ENCODE measurements at regions of chr19 and their contacts with region 1.

Region 1: DNA sequence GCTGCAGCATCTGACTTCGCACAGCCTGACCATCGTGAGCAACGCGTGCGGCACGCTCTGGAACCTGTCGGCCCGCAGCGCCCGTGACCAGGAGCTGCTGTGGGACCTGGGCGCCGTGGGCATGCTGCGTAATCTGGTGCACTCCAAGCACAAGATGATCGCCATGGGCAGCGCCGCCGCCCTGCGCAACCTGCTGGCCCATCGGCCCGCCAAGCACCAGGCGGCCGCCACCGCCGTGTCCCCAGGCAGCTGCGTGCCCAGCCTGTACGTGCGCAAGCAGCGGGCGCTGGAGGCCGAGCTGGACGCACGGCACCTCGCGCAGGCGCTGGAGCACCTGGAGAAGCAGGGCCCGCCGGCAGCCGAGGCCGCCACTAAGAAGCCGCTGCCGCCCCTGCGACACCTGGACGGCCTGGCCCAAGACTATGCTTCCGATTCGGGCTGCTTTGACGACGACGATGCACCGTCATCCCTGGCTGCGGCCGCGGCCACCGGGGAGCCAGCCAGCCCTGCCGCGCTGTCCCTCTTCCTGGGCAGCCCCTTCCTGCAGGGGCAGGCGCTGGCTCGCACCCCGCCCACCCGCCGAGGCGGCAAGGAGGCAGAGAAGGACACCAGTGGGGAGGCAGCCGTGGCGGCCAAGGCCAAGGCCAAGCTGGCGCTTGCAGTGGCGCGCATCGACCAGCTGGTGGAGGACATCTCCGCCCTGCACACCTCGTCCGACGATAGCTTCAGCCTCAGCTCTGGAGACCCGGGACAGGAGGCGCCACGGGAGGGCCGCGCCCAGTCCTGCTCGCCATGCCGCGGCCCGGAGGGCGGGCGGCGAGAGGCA is 13.6 kb downstream of the C19orf25 start:
- DNase-seq: peak; percentile 72
- H3K4me3 Mint-ChIP-seq: no peak overlapping the region
- H3K27ac Mint-ChIP-seq: no peak overlapping the region
- H3K4me1 Mint-ChIP-seq: no peaks in the 10 kb centered on the region
- H3K27me3 Mint-ChIP-seq: peaks cover 1% of the 10 kb centered on the region

Region 2: GRCh38 chr19:1754616-1755466 is 289.4 kb after region 1 on chr19:
- intact Hi-C with region 1: loop called (anchors 5 kb)
- DNase-seq: peak; percentile 71
- H3K4me3 Mint-ChIP-seq: no peak overlapping the region
- H3K27ac Mint-ChIP-seq: peak overlapping the region; percentile 80
- H3K4me1 Mint-ChIP-seq: peaks cover 2% of the 10 kb centered on the region
- H3K27me3 Mint-ChIP-seq: peaks cover 63% of the 10 kb centered on the region